ENCODE measurements at regions of chr10 and their contacts with region 1.

Region 1: GRCh38 chr10:20616918-20617810 is 279.9 kb downstream of the NEBL start:
- DNase-seq: no peak
- H3K4me3 ChIP-seq: no peak overlapping the region
- H3K27ac ChIP-seq: peak overlapping the region in 1 of 4 donors; percentile 5
- H3K4me1 ChIP-seq: peaks cover 0 to 16% (median 0%) of the 10 kb centered on the region in 4 donors
- H3K27me3 ChIP-seq: no peaks in the 10 kb centered on the region
- CTCF ChIP-seq: no peak
- EP300 ChIP-seq: no peak
- POLR2A ChIP-seq: no peak

Region 2: DNA sequence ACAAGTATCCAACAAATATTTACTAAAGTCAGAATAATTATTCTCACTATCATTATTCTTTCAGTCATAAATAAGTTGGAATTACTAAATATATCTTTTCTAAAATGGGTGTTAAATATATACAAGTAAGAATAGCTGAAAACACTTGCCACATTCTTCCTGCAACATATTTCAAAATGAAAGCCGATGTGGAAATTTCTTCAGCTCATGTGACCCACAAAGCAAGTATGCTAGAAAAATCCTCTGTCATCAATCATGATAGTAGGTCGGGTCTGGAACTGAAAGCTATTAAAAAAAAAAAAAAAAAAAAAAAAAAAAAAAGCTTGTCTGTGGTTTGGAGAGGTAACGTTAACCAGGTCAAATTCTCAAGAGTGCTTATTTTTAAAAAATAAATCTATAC is 64.8 kb before region 1 on chr10:
- in situ Hi-C with region 1: no loop called
- intact Hi-C with region 1: loop called (anchors 2 kb)
- DNase-seq: no peak
- H3K4me3 ChIP-seq: no peak overlapping the region
- H3K27ac ChIP-seq: no peak overlapping the region
- H3K4me1 ChIP-seq: no peaks in the 10 kb centered on the region
- H3K27me3 ChIP-seq: no peaks in the 10 kb centered on the region
- CTCF ChIP-seq: no peak
- EP300 ChIP-seq: no peak
- POLR2A ChIP-seq: no peak

Region 3: GRCh38 chr10:20698837-20699236 is 81.7 kb after region 1 on chr10:
- in situ Hi-C with region 1: no loop called
- intact Hi-C with region 1: no loop called
- DNase-seq: no peak
- H3K4me3 ChIP-seq: no peak overlapping the region
- H3K27ac ChIP-seq: no peak overlapping the region
- H3K4me1 ChIP-seq: no peaks in the 10 kb centered on the region
- H3K27me3 ChIP-seq: no peaks in the 10 kb centered on the region
- CTCF ChIP-seq: no peak
- EP300 ChIP-seq: no peak
- POLR2A ChIP-seq: no peak